CD14-positive monocyte (primary cell): ENCODE measurements at regions of chr9 and their contacts with region 1.

Region 1: DNA sequence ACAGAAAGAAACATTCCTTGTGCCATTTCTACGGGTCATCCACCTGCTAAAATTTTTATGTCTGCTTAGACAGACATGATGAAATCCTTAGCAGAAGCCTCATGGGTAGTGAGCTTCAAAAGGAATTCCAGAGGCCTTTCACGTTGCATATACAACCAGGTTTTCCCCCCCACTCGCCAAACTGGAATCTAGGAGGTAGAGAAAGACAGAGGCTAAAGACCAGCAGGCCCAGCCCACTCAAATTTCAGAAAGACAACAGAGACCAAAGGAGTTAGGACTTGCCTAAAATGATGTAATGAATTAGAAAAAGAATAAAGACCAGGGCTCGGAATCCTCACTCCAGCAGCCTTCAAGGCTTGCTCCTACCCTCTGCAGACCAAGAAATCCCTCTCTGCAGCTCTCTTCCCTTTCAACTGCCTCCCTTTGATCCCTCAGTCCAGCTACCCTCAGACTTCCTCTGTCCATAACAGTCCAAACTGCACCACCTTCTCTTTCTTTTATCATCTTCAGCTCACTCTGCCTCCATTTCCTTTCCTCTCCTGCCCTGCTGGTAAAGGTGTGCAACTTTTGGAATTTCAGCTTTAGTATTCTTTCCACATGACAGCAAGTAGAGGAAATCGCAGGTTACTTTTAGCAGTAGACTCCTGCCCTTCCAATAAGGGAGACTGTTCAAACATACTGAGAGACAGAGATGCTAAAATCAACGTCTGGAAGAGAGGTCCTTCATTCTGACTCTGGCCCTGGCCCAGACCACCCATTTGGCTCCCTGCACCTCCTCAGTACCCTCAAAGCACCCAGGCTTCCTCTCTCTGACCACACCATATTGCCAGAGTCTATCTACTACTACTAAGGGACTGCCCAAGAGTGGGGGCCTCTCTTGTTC is 8.9 kb downstream of the B4GALT1 start:
- DNase-seq: no peak
- H3K4me3 ChIP-seq: peak overlapping the region; percentile 8 to 95 (median 22)
- H3K4me3 Mint-ChIP-seq: peak overlapping the region; percentile 72 to 85
- H3K27ac ChIP-seq: peak overlapping the region; percentile 97 to 99
- H3K27ac Mint-ChIP-seq: peak overlapping the region; percentile 99 to 100 (median 100)
- H3K4me1 ChIP-seq: peaks cover 92 to 97% of the 10 kb centered on the region in 2 donors
- H3K4me1 Mint-ChIP-seq: peaks cover 96% of the 10 kb centered on the region
- H3K27me3 ChIP-seq: no peaks in the 10 kb centered on the region
- H3K27me3 Mint-ChIP-seq: peaks cover 0 to 5% (median 0%) of the 10 kb centered on the region in 3 donors
- CTCF ChIP-seq: no peak

Region 2: GRCh38 chr9:33139421-33140228 is 18.6 kb before region 1 on chr9:
- intact Hi-C with region 1: loop called in 1 of 2 experiments (anchors 2 kb)
- DNase-seq: no peak
- H3K4me3 ChIP-seq: no peak overlapping the region
- H3K4me3 Mint-ChIP-seq: peak overlapping the region in 1 of 2 donors; percentile 33
- H3K27ac ChIP-seq: peak overlapping the region in 1 of 2 donors; percentile 21
- H3K27ac Mint-ChIP-seq: peak overlapping the region in 6 of 7 donors; percentile 3 to 81 (median 48)
- H3K4me1 ChIP-seq: peaks cover 55 to 79% of the 10 kb centered on the region in 2 donors
- H3K4me1 Mint-ChIP-seq: peaks cover 89% of the 10 kb centered on the region
- H3K27me3 ChIP-seq: no peaks in the 10 kb centered on the region
- H3K27me3 Mint-ChIP-seq: peaks cover 0 to 3% (median 0%) of the 10 kb centered on the region in 3 donors
- CTCF ChIP-seq: no peak

Region 3: GRCh38 chr9:33187519-33188218 is 29.5 kb after region 1 on chr9:
- intact Hi-C with region 1: no loop called
- DNase-seq: no peak
- H3K4me3 ChIP-seq: no peak overlapping the region
- H3K4me3 Mint-ChIP-seq: no peak overlapping the region
- H3K27ac ChIP-seq: no peak overlapping the region
- H3K27ac Mint-ChIP-seq: no peak overlapping the region
- H3K4me1 ChIP-seq: no peaks in the 10 kb centered on the region
- H3K4me1 Mint-ChIP-seq: peaks cover 1% of the 10 kb centered on the region
- H3K27me3 ChIP-seq: no peaks in the 10 kb centered on the region
- H3K27me3 Mint-ChIP-seq: peaks cover 0 to 4% (median 1%) of the 10 kb centered on the region in 3 donors
- CTCF ChIP-seq: no peak